ENCODE measurements at regions of chr7 and their contacts with region 1.

Region 1: DNA sequence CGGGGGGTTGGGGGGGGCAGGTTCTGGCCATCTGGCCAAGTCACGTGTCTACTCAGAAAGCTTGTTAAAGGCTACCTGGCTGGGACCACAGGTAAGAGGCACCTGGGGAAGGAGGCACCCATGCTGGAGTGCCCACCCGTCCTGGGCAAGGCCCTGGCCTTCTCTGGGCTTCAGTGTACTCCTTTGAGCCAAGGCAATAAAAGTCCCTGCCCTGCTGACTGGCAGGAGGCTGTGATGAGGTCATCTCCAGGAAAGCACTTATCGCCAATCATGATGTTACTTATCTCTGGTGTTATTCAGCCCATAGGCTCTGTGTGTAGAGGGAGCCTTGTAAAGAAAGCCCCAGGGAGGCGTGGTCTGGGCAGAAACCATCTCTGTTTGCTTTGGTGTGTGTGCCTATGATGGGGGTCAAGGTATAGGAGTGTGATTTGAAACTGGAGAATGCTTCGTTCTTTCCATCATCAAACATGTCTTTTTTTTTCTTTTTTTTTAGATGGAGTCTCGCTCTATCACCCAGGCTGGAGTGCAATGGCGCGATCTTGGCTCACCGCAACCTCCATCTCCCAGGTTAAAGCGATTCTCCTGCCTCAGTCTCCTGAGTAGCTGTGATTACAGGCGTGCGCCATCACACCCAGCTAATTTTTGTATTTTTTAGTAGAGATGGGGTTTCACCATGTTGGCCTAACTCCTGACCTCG is 2.5 kb upstream of the CLDN4 start:
- DNase-seq: peak; percentile 92 to 99
- H3K4me3 ChIP-seq: peak overlapping the region; percentile 58; the same call in 1 of the 2 replicates
- H3K27ac ChIP-seq: peak overlapping the region; percentile 99
- H3K4me1 ChIP-seq: peaks cover 69% of the 10 kb centered on the region
- H3K27me3 ChIP-seq: no peaks in the 10 kb centered on the region
- CTCF ChIP-seq: no peak

Region 2: GRCh38 chr7:73727952-73728351 is 100.3 kb before region 1 on chr7:
- CTCF ChIA-PET with region 1: no interaction called
- POLR2A ChIA-PET with region 1: interaction called, 10 read pairs
- intact Hi-C with region 1: no loop called
- DNase-seq: no peak
- H3K4me3 ChIP-seq: no peak overlapping the region
- H3K27ac ChIP-seq: no peak overlapping the region
- H3K4me1 ChIP-seq: no peaks in the 10 kb centered on the region; the same call in 1 of the 2 replicates
- H3K27me3 ChIP-seq: no peaks in the 10 kb centered on the region
- CTCF ChIP-seq: no peak

Region 3: GRCh38 chr7:73792594-73793292 is 35.5 kb before region 1 on chr7:
- CTCF ChIA-PET with region 1: no interaction called
- POLR2A ChIA-PET with region 1: interaction called, 6 read pairs
- intact Hi-C with region 1: loop called (anchors 1 kb)
- DNase-seq: peak; percentile 70 to 93
- H3K4me3 ChIP-seq: no peak overlapping the region
- H3K27ac ChIP-seq: peak overlapping the region; percentile 80
- H3K4me1 ChIP-seq: peaks cover 29% of the 10 kb centered on the region
- H3K27me3 ChIP-seq: no peaks in the 10 kb centered on the region
- CTCF ChIP-seq: no peak

Region 4: GRCh38 chr7:73842247-73842895 is 14.1 kb after region 1 on chr7 and contains the start of gene METTL27:
- CTCF ChIA-PET with region 1: interaction called, 4 read pairs
- POLR2A ChIA-PET with region 1: interaction called, 63 read pairs
- intact Hi-C with region 1: no loop called
- DNase-seq: peak; percentile 79 to 97
- H3K4me3 ChIP-seq: peak within 1 kb of the TSS; percentile 84
- H3K27ac ChIP-seq: peak within 1 kb of the TSS; percentile 59
- H3K4me1 ChIP-seq: peaks cover 20% of the 10 kb centered on the region
- H3K27me3 ChIP-seq: no peaks in the 10 kb centered on the region
- CTCF ChIP-seq: no peak
- total RNA-seq, gene METTL27: 23.2 and 34.7 TPM in 2 replicates

Region 5: GRCh38 chr7:73918926-73919693 is 90.9 kb after region 1 on chr7:
- CTCF ChIA-PET with region 1: no interaction called
- POLR2A ChIA-PET with region 1: no interaction called
- intact Hi-C with region 1: no loop called
- DNase-seq: no peak
- H3K4me3 ChIP-seq: no peak overlapping the region
- H3K27ac ChIP-seq: no peak overlapping the region
- H3K4me1 ChIP-seq: peaks cover 9% of the 10 kb centered on the region
- H3K27me3 ChIP-seq: peaks cover 7% of the 10 kb centered on the region; the same call in 1 of the 2 replicates
- CTCF ChIP-seq: no peak

Region 6: DNA sequence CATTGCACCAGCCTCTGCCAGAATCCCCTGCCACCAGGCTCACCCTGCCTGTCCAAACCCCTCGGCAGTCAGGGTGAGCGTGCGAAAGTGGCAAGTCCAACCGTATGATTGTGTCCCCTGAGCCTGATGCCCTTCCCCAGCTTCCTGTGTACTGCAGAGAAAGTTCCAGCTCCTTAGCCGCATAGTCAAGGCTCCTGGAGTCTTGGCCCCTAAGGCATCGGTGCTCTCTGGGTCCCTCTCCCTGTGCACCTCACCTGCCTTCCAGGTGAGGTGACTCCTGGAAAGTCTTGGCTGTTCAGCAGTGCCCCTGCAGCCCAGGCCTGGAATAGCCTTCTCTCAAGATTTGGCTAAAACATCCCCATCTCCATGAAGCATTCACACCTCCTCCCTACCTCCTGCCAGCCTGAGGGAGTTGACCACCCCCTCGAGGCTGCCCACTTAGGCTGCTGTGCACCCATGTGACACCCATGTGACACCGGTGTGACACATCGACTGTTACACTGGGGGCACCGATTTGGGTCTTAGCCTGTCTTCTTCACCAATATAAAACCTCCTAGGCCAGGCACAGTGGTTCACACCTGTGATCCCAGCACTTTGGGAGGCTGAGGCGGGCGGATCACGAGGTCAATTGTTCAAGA is 143.6 kb after region 1 on chr7:
- CTCF ChIA-PET with region 1: no interaction called
- POLR2A ChIA-PET with region 1: no interaction called
- intact Hi-C with region 1: no loop called
- DNase-seq: peak; percentile 42 to 52
- H3K4me3 ChIP-seq: no peak overlapping the region
- H3K27ac ChIP-seq: no peak overlapping the region
- H3K4me1 ChIP-seq: no peaks in the 10 kb centered on the region
- H3K27me3 ChIP-seq: no peaks in the 10 kb centered on the region
- CTCF ChIP-seq: peak; percentile 67

Region 7: DNA sequence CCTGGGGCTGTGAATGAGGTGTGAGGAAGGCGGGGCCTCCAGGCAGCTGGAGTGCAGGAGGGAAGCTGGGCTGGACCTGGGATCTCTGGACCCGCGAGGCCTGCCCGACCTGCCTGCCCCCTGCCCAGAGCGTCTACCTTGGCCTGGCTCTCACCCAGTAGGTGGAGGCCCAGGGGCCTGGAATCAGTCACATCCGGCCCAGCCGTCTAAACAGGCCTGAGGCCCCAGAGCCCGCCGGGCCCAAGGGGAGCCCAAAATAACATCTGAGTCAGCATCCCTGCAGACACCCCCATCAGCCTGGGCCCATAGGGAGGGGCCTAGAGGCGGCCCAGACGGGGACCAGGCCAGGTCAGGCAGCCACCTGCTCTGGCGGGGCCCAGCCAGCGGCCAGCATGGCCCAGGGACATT is 184.6 kb after region 1 on chr7:
- CTCF ChIA-PET with region 1: no interaction called
- POLR2A ChIA-PET with region 1: no interaction called
- intact Hi-C with region 1: no loop called
- DNase-seq: peak in 1 of 2 experiments; percentile 60
- H3K4me3 ChIP-seq: no peak overlapping the region
- H3K27ac ChIP-seq: no peak overlapping the region
- H3K4me1 ChIP-seq: no peaks in the 10 kb centered on the region
- H3K27me3 ChIP-seq: no peaks in the 10 kb centered on the region
- CTCF ChIP-seq: no peak

Measured in PC-9 (cell line).